Activated naive CD4-positive, alpha-beta T cell treated with anti-CD3 and anti-CD28 coated beads for 36 hours (primary cell): ENCODE measurements at regions of chr14 and their contacts with region 1.

Region 1: GRCh38 chr14:39491134-39491571 is 58.9 kb upstream of the FBXO33 start:
- DNase-seq: no peak
- H3K4me3 Mint-ChIP-seq: no peak overlapping the region
- H3K27ac Mint-ChIP-seq: no peak overlapping the region
- H3K4me1 Mint-ChIP-seq: no peaks in the 10 kb centered on the region
- H3K27me3 Mint-ChIP-seq: no peaks in the 10 kb centered on the region

Region 2: DNA sequence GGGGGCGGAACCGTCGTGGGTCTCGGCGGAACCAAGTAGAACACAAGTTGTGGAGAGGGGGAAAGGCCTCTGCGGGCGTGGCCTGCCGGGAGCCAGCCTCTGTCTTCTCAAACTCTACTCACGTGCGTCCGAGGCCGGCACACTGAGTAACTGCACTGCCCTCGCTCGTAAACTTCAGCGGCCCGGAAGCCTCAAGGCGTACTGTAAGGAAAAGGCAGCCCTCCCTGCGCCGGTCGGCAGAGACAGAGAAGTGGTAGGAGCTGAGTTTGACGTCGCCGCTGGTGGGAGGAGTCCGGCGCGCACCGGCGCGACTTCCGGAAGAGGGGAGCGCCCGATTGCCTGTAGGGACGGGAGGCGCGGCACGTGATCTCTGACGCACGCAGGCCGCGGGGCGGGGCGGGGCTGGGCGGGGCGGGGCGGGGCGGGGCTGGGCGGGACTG is 59.0 kb before region 1 on chr14 and contains the start of gene FBXO33:
- CTCF ChIA-PET with region 1: no interaction called
- intact Hi-C with region 1: no loop called
- DNase-seq: peak; percentile 96
- H3K4me3 Mint-ChIP-seq: peak within 1 kb of the TSS; percentile 100
- H3K27ac Mint-ChIP-seq: peak within 1 kb of the TSS; percentile 100
- H3K4me1 Mint-ChIP-seq: peaks cover 35% of the 10 kb centered on the region
- H3K27me3 Mint-ChIP-seq: no peaks in the 10 kb centered on the region
- total RNA-seq, gene FBXO33: 16.1 to 16.4 TPM

Region 3: DNA sequence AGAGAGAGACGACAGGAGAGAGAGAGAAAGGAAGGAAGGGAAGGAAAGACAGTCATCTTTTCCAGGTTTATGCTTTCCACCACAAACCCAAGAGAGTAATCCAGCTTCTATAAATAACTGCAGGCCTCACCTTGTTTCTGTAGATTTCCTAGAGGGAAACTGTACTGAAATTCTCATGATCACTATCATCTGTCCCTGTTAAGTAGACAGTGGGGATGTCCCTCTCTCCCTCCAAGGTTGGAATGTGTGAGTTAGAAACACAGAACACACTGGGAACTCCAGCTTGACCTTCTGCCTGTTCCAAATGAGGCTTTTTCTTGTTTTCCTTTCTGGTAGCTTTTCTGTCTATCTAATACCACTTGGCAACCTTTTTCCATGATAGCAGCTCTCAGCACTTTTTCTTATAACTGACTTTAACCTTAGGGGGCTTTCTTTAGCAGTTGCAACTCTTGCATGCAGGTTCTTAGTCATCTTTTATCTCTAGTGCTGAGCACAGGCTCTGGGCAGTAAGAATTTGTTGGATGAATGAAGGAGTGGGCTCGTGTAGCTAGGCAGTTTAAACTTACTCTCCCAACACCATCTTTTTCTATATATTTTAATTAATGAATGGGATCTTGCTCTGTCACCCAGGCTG is 36.1 kb before region 1 on chr14:
- CTCF ChIA-PET with region 1: no interaction called
- intact Hi-C with region 1: loop called (anchors 1 kb)
- DNase-seq: no peak
- H3K4me3 Mint-ChIP-seq: no peak overlapping the region
- H3K27ac Mint-ChIP-seq: no peak overlapping the region
- H3K4me1 Mint-ChIP-seq: peaks cover 18% of the 10 kb centered on the region
- H3K27me3 Mint-ChIP-seq: no peaks in the 10 kb centered on the region

Region 4: DNA sequence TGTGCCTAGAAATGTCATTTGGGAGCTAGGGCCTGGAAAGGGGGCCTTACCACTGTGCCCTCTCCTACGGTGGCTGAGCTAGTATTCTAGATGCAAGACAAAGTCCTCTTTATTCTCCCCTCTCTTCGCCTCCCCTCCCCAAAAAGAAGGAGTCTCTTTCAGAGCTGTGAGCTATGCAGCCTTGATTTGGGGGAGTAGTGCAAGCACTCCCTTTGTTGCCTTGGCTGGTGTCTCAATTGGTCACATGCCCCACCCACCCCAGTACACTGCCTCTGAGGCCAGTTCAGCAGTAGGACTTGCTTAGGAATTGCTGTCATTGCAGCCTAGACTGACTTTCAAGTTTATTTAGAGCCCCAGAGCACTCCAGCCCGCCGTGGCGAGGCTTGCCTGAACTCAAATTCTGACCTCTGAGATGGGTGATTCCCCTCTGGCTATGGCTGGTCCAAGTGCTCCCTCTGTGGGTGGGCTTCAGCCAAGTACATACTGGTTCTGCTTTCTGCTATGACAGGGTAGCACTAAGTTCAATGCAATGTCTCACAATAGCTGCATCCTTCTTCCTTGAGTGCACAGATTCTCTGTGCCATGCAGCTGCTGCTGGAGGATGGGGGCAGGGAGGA is 22.0 kb before region 1 on chr14:
- CTCF ChIA-PET with region 1: interaction called, 10 read pairs
- intact Hi-C with region 1: no loop called
- DNase-seq: peak; percentile 70
- H3K4me3 Mint-ChIP-seq: no peak overlapping the region
- H3K27ac Mint-ChIP-seq: no peak overlapping the region
- H3K4me1 Mint-ChIP-seq: no peaks in the 10 kb centered on the region
- H3K27me3 Mint-ChIP-seq: peaks cover 9% of the 10 kb centered on the region

Region 5: DNA sequence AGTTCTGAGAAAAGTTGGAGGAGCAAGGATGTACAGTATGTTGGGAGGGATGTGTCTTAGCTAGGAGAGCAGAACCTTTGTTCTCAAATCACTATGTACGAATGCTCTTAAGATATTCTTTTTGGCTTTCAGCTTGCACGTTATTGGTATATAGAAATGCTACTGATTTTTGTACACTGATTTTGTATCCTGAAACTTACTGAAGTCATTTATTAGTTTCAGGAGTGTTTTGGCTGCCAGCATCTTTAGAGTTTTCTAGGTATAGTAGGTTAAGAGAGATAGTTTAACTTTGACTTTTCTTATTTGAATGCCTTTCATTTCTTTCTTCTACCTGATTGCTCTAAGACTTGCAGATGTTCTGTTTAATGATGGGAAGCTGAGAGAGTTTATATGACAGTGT is 383.9 kb after region 1 on chr14:
- CTCF ChIA-PET with region 1: no interaction called
- intact Hi-C with region 1: no loop called
- DNase-seq: no peak
- H3K4me3 Mint-ChIP-seq: no peak overlapping the region
- H3K27ac Mint-ChIP-seq: no peak overlapping the region
- H3K4me1 Mint-ChIP-seq: peaks cover 2% of the 10 kb centered on the region
- H3K27me3 Mint-ChIP-seq: no peaks in the 10 kb centered on the region

Region 6: GRCh38 chr14:39988939-39989338 is 497.8 kb after region 1 on chr14:
- CTCF ChIA-PET with region 1: no interaction called
- intact Hi-C with region 1: loop called (anchors 5 kb)
- DNase-seq: no peak
- H3K4me3 Mint-ChIP-seq: no peak overlapping the region
- H3K27ac Mint-ChIP-seq: no peak overlapping the region
- H3K4me1 Mint-ChIP-seq: no peaks in the 10 kb centered on the region
- H3K27me3 Mint-ChIP-seq: no peaks in the 10 kb centered on the region